Mammary epithelial cell (primary cell): ENCODE measurements at regions of chr13 and their contacts with region 1.

Region 1: DNA sequence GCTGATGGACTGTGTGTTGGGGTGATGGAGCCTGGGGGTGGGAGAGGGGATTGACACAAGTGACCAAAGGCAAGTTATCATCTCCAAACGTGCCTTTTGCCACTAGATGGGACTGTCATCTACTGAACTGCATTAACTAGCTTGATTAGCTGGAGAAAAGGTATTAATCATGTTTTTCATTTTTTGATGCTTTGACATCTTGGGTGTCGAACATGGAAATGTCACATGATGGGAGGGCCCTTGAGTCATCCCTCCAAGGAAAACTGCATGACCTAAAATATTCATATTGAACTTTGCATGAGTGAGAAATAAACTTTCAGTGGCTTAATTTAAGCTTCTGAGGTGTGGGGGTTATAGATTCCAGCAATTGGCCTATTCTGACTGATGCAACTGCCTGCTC is 73.2 kb downstream of the ALOX5AP start:
- DNase-seq: no peak
- H3K4me3 ChIP-seq: no peak overlapping the region
- H3K27ac ChIP-seq: no peak overlapping the region
- H3K4me1 ChIP-seq: peaks cover 51% of the 10 kb centered on the region
- H3K27me3 ChIP-seq: no peaks in the 10 kb centered on the region
- CTCF ChIP-seq: peak in 1 of 2 donors; percentile 41

Region 2: DNA sequence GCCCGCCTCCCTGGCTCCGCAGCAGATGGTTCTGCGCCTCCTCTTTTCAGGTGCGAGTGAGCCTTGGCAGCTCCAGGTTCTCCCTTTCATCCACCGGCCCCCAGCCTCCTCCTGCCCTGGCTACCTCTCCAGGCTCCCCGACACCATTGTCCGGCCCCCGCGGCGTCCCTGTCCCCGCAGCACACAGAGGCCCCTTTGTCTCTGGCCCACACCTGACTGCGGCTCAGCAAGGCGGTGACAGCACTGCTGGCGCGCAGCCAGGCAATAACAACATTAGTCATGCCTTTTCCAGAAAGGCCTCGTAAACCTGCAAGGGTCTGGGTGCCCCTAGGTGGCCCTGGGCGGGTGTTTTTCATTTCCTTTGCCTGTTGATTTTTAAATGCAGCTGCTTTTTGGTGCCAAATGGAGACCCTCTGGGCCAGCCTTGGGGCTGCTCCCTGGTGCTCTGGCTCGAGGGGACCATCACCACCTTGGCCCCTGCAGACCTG is 24.3 kb after region 1 on chr13:
- CTCF ChIA-PET with region 1: no interaction called
- dilution Hi-C with region 1: no loop called
- in situ Hi-C with region 1: no loop called
- intact Hi-C with region 1: loop called (anchors 1 kb)
- DNase-seq: peak; percentile 93
- H3K4me3 ChIP-seq: no peak overlapping the region
- H3K27ac ChIP-seq: peak overlapping the region; percentile 45
- H3K4me1 ChIP-seq: peaks cover 59% of the 10 kb centered on the region
- H3K27me3 ChIP-seq: no peaks in the 10 kb centered on the region
- CTCF ChIP-seq: peak in 1 of 2 donors; percentile 4

Region 3: GRCh38 chr13:31012655-31013024 is 204.1 kb after region 1 on chr13:
- CTCF ChIA-PET with region 1: no interaction called
- dilution Hi-C with region 1: no loop called
- in situ Hi-C with region 1: no loop called
- intact Hi-C with region 1: loop called (anchors 1 kb)
- DNase-seq: no peak
- H3K4me3 ChIP-seq: no peak overlapping the region
- H3K27ac ChIP-seq: no peak overlapping the region
- H3K4me1 ChIP-seq: peaks cover 16% of the 10 kb centered on the region
- H3K27me3 ChIP-seq: no peaks in the 10 kb centered on the region
- CTCF ChIP-seq: peak; percentile 20 to 49

Region 4: GRCh38 chr13:31209172-31209840 is 400.7 kb after region 1 on chr13:
- CTCF ChIA-PET with region 1: no interaction called
- dilution Hi-C with region 1: no loop called
- in situ Hi-C with region 1: no loop called
- intact Hi-C with region 1: no loop called
- DNase-seq: no peak
- H3K4me3 ChIP-seq: no peak overlapping the region
- H3K27ac ChIP-seq: no peak overlapping the region
- H3K4me1 ChIP-seq: peaks cover 7% of the 10 kb centered on the region
- H3K27me3 ChIP-seq: no peaks in the 10 kb centered on the region
- CTCF ChIP-seq: no peak